PC-9 (cell line): ENCODE measurements at regions of chr22 and their contacts with region 1.

Region 1: DNA sequence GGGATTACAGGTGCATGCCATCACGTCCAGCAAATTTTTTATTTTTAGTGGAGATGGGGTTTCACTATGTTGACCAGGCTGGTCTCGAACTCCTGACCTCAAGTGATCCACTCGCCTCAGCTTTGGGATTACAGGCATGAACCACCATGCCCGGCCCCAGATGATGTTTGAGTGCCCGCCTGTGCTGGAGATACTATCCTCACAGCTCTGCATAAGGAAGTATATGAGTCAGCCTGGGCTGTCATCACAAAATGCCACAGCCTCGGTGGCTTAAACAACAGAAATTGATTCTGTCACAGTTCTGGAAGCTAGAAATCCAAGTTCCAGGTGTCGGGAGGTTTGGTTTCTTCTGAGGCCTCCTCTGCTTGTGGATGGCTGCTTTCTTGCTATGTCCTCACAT is 119.3 kb downstream of the OSBP2 start:
- DNase-seq: peak in 1 of 2 experiments; percentile 25
- H3K4me3 ChIP-seq: no peak overlapping the region
- H3K27ac ChIP-seq: no peak overlapping the region
- H3K4me1 ChIP-seq: no peaks in the 10 kb centered on the region
- H3K27me3 ChIP-seq: no peaks in the 10 kb centered on the region
- CTCF ChIP-seq: no peak

Region 2: DNA sequence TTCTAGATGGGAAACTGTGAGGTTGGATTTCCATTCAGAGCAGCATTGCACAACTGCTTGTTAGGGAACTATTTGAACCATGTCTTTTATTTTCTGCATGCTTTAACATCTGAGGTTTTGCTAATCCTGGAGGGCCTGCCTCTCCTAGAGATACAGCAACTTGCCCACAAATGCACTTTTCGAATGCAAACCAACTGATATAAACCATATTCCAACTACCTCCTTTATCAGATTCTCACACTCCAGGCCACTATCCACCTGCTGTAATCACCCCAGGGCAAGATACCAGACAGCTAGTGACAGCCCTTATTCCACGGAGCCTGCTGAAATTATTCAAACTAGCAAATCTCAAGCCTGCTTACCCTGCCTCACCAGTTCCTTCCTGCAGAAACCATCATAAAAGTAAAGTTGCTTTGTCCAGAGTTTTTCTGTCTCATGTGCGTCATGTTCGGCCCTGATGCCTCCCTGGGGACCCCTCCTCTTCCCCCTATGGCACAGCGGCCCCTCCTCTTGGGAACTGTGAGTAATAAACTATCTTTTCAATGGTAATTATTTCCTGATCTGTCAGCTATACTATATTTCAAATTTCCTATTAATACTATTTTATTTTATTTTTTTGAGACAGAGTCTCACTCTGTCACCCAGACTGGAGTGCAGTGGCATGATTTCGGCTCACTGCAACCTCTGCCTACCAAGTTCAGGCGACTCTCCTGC is 290.0 kb before region 1 on chr22:
- CTCF ChIA-PET with region 1: no interaction called
- POLR2A ChIA-PET with region 1: interaction called, 12 read pairs
- intact Hi-C with region 1: no loop called
- DNase-seq: no peak
- H3K4me3 ChIP-seq: no peak overlapping the region
- H3K27ac ChIP-seq: no peak overlapping the region
- H3K4me1 ChIP-seq: no peaks in the 10 kb centered on the region
- H3K27me3 ChIP-seq: peaks cover 19% of the 10 kb centered on the region
- CTCF ChIP-seq: no peak